Mucosa of descending colon (tissue), 3 donors: ENCODE measurements at regions of chr1 and their contacts with region 1.

Region 1: GRCh38 chr1:30727824-30728223 is 4.4 kb upstream of the MATN1 start:
- DNase-seq: no peak
- ATAC-seq: peak; percentile 6
- H3K4me3 ChIP-seq: no peak overlapping the region
- H3K4me1 ChIP-seq: no peaks in the 10 kb centered on the region
- CTCF ChIP-seq: no peak

Region 2: DNA sequence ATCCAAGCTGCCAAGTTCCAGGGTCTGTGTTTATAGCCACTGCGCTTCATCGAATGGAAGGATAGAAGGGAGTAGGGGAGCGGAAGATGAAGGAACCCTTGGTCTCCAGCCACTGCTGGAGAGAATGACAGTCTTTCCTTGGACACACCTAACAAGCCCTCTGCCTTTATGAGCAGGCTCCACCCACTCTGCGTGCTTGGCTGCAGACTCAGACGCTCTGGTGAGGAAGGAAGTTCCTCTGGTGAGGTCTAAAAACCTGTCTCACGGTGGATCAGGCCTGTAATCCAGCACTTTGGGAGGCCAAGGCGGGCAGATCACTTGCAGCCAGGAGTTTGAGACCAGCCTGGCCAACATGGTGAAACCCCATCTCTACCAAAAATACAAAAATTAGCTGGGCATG is 59.8 kb before region 1 on chr1:
- intact Hi-C with region 1: no loop called
- DNase-seq: peak; percentile 73 to 84 (median 78)
- ATAC-seq: peak; percentile 97
- H3K4me3 ChIP-seq: no peak overlapping the region
- H3K4me1 ChIP-seq: no peaks in the 10 kb centered on the region
- CTCF ChIP-seq: no peak

Region 3: GRCh38 chr1:30763651-30764248 is 35.9 kb after region 1 on chr1:
- intact Hi-C with region 1: loop called in 1 of 2 experiments (anchors 5 kb)
- DNase-seq: peak in 1 of 3 donors; percentile 49
- ATAC-seq: no peak
- H3K4me3 ChIP-seq: no peak overlapping the region
- H3K4me1 ChIP-seq: no peaks in the 10 kb centered on the region
- CTCF ChIP-seq: no peak